ENCODE measurements at regions of chr4 and their contacts with region 1.

Region 1: DNA sequence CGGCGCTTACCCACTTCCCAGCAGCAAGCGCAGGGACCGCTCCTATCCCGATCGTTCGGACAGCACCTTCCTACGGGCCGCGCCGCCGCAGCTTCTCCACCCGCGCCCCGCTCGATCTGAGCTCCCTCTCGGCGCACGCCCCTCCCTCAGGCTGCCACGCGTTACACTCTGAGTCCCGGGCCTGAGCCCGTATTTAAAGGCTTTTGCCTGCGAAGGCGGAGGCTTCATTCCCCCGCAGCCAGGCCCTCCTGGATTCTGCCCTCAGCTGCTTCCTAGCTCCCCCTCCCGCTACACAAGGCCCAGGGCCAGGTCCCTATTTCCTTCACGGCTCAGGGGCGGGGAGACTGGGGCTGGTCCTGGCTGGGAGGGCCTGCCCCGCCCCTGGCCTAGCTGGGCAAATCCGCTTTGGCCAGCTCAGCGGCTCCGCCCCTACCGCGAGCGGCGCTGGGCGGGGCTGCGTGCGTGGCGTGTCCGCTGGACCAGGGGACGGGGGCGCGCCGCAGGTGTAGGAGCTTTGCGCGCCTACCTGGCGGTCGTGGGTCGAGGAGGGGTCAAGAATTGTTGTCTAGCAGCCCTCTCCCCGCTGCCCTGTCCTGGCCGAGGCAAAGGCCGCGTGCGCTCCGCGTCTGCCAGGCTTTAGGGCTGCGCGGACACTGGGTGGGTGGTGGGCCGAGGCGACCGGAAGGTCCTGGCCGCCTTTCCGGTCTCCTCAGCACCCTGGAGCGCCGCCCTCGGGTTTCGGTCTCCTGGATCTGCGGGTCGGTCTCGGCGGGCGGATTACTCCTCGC is at the start of gene UGDH:
- DNase-seq: peak; percentile 91
- H3K4me3 Mint-ChIP-seq: peak within 1 kb of the TSS; percentile 99
- H3K27ac Mint-ChIP-seq: peak within 1 kb of the TSS; percentile 92
- H3K4me1 Mint-ChIP-seq: peaks cover 19% of the 10 kb centered on the region
- H3K27me3 Mint-ChIP-seq: no peaks in the 10 kb centered on the region
- total RNA-seq, gene UGDH: 26.0 and 30.6 TPM in 2 replicates

Region 2: DNA sequence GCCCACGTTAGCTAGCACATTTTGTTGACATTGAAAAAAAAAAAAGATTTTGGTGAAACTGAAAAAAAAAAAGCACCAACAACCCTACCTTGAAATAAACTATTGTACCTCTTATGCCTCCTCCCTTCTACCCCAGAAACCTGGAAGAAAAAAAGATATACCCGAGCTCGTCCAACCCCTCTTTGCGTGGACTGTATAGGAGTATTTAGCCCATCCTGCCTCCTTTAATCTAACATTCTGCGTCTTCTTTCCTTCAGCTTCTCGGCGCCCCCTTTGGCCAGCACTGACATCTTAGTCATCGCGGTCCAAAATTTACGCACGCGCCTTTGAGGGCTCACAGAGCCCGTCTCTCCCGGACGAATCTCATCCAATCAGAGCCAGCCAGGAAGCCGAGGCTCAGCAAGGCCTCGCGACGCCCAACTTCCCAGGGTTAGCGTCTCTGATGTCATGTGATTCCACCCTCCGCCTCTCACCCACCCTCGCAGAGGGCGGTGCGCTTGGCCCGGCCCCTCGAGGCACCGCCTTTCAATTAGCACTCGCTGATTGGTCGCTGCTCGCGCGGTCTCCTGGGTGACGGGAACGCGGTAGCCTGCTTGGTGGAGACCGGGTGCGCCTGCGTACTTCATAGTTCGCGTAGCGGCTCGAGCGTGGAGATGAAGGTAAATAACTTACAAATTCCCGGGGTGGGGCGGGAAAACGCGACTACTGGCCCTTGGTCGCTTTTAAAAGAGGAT is 345.4 kb before region 1 on chr4 and contains the start of gene WDR19:
- intact Hi-C with region 1: loop called (anchors 1 kb)
- DNase-seq: peak; percentile 98
- H3K4me3 Mint-ChIP-seq: no peak within 1 kb of the TSS
- H3K27ac Mint-ChIP-seq: no peak within 1 kb of the TSS
- H3K4me1 Mint-ChIP-seq: no peaks in the 10 kb centered on the region
- H3K27me3 Mint-ChIP-seq: peaks cover 15% of the 10 kb centered on the region
- total RNA-seq, gene WDR19: 12.6 and 13.7 TPM in 2 replicates

Region 3: DNA sequence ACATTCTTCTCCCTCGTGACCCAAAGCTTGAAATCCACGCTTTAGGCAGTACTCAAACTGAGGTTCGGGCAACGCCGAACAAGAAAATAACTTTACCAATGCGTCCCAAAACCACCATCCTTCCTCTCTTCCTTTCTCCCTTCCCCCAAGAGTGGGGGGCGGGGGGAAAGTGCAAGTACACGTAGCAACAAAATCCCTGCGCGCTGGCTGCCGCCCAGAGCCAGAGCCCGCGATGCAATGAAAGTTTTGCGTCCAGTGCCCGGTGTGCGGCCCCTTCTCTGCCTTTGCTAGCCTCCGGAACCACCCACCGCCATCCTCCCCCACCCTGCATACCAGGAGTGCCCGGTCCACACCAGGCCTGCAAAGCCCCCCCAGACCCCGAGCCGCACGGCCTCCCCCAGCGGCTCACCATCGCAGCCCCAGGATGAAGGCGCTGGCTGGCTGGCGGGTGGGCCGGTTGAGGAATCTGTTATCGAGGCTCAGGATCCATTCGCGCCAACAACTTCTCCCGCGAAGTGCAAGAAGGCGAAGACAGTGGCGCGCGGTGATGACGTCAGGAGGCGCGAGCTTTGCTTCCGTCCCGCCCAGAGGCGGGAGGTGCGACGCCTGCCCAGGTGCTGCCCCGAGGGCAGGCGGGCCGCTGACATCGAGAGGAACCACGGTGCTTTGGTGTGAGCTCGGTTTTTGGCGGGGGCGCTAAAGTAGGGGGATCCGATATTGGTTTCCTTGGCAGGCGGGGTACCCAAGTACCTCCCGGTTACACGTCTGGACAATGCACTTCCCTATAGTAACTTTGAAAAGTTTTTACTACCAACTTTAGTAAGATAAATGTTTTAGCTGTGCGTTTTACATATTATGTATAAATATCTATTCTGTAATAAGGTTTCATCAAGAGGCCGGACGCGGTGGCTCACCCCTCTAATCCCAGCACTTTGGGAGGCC is 161.4 kb before region 1 on chr4 and contains the start of gene RFC1:
- intact Hi-C with region 1: loop called (anchors 5 kb)
- DNase-seq: peak; percentile 89
- H3K4me3 Mint-ChIP-seq: peak within 1 kb of the TSS; percentile 95
- H3K27ac Mint-ChIP-seq: peak within 1 kb of the TSS; percentile 94
- H3K4me1 Mint-ChIP-seq: peaks cover 26% of the 10 kb centered on the region
- H3K27me3 Mint-ChIP-seq: no peaks in the 10 kb centered on the region
- total RNA-seq, gene RFC1: 83.3 and 87.1 TPM in 2 replicates

Region 4: DNA sequence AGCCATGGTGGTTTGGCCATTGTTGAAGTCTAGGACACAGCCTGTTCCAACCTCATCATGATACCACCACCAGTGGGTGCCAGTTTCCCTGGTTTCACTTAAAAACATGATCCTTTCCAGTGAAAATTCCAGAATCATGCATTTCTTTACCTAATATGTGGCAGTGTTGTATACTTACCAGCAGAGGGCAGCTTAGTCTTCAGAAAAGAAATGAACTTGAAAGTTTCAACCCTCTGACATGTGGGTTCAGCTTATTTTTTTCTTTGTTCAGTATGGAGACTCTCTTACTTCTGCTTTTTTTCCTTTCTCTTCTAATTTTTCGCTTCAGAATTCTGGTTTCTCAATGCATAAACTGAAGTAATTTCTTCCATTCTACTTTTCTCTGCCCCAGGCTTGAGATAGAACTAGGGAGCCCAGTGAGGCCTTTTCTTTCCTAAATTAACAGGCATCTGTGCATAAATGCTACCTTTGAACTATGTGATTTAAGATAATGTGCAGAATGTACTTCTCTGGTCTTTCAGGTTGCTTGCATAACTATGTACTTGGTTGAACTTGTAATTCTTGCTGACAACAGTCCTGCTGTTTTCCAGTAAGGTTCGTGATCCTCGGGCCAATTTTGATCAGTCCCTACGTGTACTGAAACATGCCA is 57.9 kb before region 1 on chr4:
- intact Hi-C with region 1: loop called (anchors 2 kb)
- DNase-seq: no peak
- H3K4me3 Mint-ChIP-seq: no peak overlapping the region
- H3K27ac Mint-ChIP-seq: no peak overlapping the region
- H3K4me1 Mint-ChIP-seq: peaks cover 8% of the 10 kb centered on the region
- H3K27me3 Mint-ChIP-seq: no peaks in the 10 kb centered on the region

Region 5: GRCh38 chr4:39621582-39621981 is 94.1 kb after region 1 on chr4:
- intact Hi-C with region 1: loop called (anchors 5 kb)
- DNase-seq: no peak
- H3K4me3 Mint-ChIP-seq: no peak overlapping the region
- H3K27ac Mint-ChIP-seq: no peak overlapping the region
- H3K4me1 Mint-ChIP-seq: no peaks in the 10 kb centered on the region
- H3K27me3 Mint-ChIP-seq: no peaks in the 10 kb centered on the region

Region 6: DNA sequence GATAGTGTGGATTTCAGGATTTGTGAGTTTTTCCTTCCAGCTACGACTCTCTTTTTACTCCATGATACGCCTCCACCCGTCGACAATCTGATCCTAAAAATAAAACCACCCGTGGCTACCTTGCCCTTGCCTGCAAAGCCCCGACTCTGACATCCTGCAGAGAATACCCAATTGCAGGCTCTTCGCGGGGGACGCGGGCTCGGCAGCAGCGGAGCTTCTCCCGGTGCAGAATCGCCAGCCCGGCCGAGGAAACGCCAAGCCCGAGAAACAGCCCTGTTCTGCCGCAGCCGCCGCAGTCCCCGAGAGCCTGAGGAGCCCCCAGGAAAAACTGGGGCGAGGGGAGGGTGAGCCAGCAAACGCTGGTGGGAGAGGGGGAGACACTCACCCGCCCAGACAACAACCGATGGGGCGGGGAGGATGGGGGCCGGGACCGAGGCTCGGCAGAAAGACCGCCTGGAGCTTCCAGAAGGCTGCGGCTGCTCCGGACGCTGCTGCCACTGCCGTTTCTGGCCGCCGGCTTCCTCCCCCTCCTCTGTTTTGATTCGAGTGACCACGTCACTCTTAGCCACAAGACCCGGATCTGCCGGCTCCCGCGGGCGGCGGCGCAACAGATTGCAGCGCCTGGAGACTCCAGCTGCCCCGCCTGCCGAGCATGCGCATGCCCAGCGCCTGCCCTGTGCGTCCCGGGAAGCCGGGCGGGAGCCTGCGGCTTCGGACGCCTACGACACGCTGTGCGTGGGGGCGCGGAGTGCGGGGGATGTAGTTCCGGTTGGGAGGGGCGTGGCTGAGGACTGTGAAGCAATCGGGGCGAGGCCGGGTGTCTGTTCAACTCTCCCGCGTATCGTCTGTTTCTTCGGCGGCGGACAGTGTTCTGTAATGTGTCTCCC is 111.1 kb after region 1 on chr4 and contains the start of gene SMIM14:
- intact Hi-C with region 1: loop called (anchors 1 kb)
- DNase-seq: peak; percentile 89
- H3K4me3 Mint-ChIP-seq: peak within 1 kb of the TSS; percentile 87
- H3K27ac Mint-ChIP-seq: peak within 1 kb of the TSS; percentile 83
- H3K4me1 Mint-ChIP-seq: peaks cover 22% of the 10 kb centered on the region
- H3K27me3 Mint-ChIP-seq: peaks cover 24% of the 10 kb centered on the region
- total RNA-seq, gene SMIM14: 0.76 and 1.6 TPM in 2 replicates

Region 7: GRCh38 chr4:39697740-39698423 is 170.4 kb after region 1 on chr4 and contains the start of gene UBE2K:
- intact Hi-C with region 1: loop called (anchors 1 kb)
- DNase-seq: peak; percentile 91
- H3K4me3 Mint-ChIP-seq: peak within 1 kb of the TSS; percentile 97
- H3K27ac Mint-ChIP-seq: peak within 1 kb of the TSS; percentile 97
- H3K4me1 Mint-ChIP-seq: peaks cover 37% of the 10 kb centered on the region
- H3K27me3 Mint-ChIP-seq: no peaks in the 10 kb centered on the region
- total RNA-seq, gene UBE2K: 92.2 and 96.4 TPM in 2 replicates

Measured in activated T-helper 1 cell treated with anti-CD3 and anti-CD28 coated beads, Interleukin-12 subunit alpha, Interleukin-12 subunit beta, Interleukin-2, Interleukin-4 antibody, amounts not matched to agents 30 ng/mL and 10 ng/mL and 1 ng/mL, durations not matched to agents 14 hours and 24 hours and 36 hours (primary cell).